A549 (cell line): ENCODE measurements at regions of chr7 and their contacts with region 1.

Region 1: DNA sequence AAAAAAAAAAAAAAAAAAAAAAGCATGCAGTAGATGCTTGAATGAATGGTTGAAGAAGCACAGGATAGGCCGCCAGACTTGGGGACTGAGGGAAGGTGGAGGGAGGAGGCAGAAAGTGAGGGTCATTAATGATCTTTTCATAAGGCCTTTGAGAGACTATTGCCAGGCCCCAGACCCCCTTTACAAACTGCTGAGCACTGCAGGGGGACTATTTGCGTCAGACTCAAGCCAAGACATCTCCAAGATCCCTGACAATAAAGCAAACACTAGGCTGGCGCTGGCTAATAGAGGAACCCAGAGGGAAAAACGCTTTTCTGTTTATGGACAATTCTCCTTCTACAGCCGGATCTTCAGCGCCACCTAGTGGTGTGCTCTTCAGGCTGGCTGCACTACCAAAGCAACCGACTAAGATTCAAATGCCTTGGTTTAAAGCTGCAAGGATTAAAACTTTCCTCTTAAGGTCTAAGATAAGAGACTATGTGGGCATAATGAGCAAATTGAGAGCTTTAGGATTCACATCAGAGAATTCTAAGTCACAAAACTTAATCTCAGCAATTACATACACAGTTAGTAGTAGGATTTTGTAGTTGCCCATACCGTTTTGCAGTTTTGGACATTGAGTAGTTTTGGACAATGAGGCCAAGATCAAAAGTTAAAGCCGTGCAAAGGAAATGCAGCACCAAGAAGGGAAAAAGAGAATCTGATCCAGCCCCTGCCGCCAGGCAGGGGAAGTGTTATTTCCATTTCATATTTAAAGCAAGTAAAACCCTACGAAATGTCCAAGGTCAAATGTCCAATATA is 17.9 kb upstream of the AGK start:
- DNase-seq: peak; percentile 66 to 75
- ATAC-seq: peak; percentile 87 to 97
- H3K4me3 ChIP-seq: no peak overlapping the region
- H3K27ac ChIP-seq: no peak overlapping the region
- H3K4me1 ChIP-seq: no peaks in the 10 kb centered on the region
- CTCF ChIP-seq: peak; percentile 91
- EP300 ChIP-seq: no peak
- POLR2A ChIP-seq: no peak
- RAD21 ChIP-seq: peak; percentile 88 to 92

Region 2: DNA sequence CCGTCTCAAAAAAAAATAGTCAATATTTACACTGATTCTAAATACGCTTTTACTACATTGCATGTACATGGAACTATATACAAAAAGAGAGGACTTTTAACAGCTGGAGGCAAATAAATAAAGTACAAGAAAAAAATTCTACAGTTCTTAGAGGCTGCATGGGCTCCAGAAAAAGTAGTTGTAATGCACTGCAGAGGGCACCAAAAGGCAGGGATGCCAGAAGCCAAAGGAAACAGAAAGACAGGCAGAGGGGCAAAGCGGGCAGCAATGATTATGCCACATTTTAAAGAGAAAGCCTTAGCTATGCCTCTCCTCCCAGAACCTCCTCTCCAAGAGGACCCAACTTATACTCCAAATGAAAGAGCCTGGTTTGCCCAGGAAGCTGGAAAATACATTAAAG is 872.2 kb before region 1 on chr7:
- CTCF ChIA-PET with region 1: interaction called, 13 read pairs
- POLR2A ChIA-PET with region 1: no interaction called
- DNase-seq: peak in 1 of 2 experiments; percentile 28
- ATAC-seq: peak; percentile 70 to 86; a peak in 5 of 6 replicates
- H3K4me3 ChIP-seq: no peak overlapping the region
- H3K27ac ChIP-seq: no peak overlapping the region
- H3K4me1 ChIP-seq: no peaks in the 10 kb centered on the region
- CTCF ChIP-seq: no peak; the same call in 2 of the 3 replicates
- EP300 ChIP-seq: no peak
- POLR2A ChIP-seq: no peak
- RAD21 ChIP-seq: peak; percentile 50 to 62

Region 3: DNA sequence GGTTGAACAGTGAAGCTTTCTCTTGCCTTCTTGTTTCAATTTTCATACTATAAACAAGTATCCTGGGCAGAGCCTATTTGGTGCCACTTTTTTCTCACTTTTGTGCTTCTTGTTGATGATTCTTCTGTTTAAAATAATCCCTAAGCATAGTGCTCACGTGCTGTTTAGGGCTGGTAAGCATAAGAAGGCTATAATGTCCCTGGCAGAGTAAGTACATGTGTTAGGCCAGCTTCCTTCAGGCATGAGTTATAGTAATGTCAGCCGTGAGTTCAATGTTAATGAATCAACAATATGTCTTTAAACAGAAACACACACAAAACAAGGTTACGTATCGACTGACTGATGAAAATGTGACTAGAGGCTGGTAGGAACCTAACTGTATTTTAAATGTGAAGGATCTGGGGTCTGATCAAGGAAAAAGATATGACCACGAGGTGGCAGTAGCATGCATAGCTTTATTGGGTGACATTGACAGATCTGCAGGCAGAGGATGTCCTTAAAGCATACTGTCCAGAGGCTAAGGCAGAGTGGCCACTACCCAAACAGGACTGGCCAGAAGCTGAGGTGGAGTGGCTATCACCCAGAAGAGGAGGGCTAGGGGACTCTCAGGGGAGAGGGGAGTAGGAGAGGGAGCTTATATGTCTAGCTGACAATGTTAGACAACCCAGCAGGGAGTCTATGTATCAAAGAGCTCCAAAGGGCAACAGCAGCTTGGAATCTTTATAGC is 722.4 kb before region 1 on chr7:
- CTCF ChIA-PET with region 1: interaction called, 19 read pairs
- POLR2A ChIA-PET with region 1: no interaction called
- DNase-seq: peak; percentile 52 to 75
- ATAC-seq: peak; percentile 100
- H3K4me3 ChIP-seq: no peak overlapping the region
- H3K27ac ChIP-seq: no peak overlapping the region
- H3K4me1 ChIP-seq: no peaks in the 10 kb centered on the region
- CTCF ChIP-seq: peak; percentile 85
- EP300 ChIP-seq: no peak
- POLR2A ChIP-seq: no peak
- RAD21 ChIP-seq: peak; percentile 76 to 81

Region 4: GRCh38 chr7:141462958-141463357 is 70.4 kb before region 1 on chr7:
- CTCF ChIA-PET with region 1: no interaction called
- POLR2A ChIA-PET with region 1: no interaction called
- DNase-seq: no peak
- ATAC-seq: no peak
- H3K4me3 ChIP-seq: no peak overlapping the region
- H3K27ac ChIP-seq: no peak overlapping the region
- H3K4me1 ChIP-seq: no peaks in the 10 kb centered on the region
- CTCF ChIP-seq: no peak
- EP300 ChIP-seq: no peak
- POLR2A ChIP-seq: no peak
- RAD21 ChIP-seq: no peak

Region 5: DNA sequence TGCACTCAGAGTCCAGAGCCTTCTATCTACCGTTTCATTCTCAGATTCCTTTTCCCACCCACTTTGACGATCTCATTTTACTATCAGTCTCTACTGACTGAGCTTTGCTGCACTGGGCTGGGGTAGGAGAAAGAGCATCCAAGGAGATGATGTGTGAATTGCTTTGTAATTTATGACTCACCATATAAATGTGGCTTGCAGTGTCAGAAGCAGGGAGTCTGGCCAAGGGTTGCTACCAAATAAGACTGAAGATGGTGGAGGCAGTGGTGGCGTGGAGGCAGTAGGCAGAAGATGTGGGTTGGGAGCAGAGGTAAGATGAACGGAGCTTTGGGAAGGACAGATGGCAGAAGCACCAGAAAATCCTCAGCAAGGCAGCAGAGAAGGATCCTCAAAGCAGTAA is 55.5 kb before region 1 on chr7:
- CTCF ChIA-PET with region 1: no interaction called
- POLR2A ChIA-PET with region 1: no interaction called
- DNase-seq: no peak
- ATAC-seq: no peak; a peak in 1 of 6 replicates
- H3K4me3 ChIP-seq: no peak overlapping the region
- H3K27ac ChIP-seq: no peak overlapping the region
- H3K4me1 ChIP-seq: no peaks in the 10 kb centered on the region
- CTCF ChIP-seq: no peak
- EP300 ChIP-seq: no peak
- POLR2A ChIP-seq: no peak
- RAD21 ChIP-seq: no peak

Region 6: DNA sequence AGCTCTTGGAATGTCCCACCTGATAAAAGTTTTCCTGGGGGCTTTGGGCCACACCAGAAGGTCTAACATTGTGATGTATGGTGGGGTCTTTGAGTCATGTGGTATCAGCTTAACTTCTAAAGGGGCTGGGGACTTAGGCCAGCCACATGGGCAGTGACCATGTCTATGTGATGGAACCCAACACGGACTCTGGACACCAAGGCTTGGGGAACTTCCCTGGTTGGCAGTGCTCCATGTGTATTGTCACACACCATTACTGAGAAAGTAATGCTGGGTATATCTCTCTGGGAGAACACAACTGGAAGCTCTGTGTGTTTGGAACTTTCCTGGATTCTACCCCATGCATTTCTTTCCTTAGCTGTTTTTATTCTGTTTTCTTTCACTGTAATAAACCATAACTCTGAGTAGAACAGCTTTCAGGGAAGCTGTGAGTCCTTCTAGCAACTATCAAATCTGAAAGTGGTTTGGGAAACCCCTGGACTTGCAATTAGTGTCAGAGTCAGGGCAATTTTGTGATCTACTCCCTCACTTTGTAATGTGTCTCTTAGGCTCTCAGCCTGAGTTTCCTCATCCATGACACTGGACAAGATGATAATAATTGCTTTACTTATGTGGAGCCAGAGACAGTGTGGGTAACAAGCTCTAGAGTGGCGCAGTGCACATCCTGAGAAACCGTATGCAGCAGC is 10.5 kb before region 1 on chr7:
- CTCF ChIA-PET with region 1: interaction called, 10 read pairs
- POLR2A ChIA-PET with region 1: no interaction called
- DNase-seq: no peak
- ATAC-seq: no peak
- H3K4me3 ChIP-seq: no peak overlapping the region
- H3K27ac ChIP-seq: no peak overlapping the region
- H3K4me1 ChIP-seq: no peaks in the 10 kb centered on the region
- CTCF ChIP-seq: no peak
- EP300 ChIP-seq: no peak
- POLR2A ChIP-seq: no peak
- RAD21 ChIP-seq: no peak

Region 7: DNA sequence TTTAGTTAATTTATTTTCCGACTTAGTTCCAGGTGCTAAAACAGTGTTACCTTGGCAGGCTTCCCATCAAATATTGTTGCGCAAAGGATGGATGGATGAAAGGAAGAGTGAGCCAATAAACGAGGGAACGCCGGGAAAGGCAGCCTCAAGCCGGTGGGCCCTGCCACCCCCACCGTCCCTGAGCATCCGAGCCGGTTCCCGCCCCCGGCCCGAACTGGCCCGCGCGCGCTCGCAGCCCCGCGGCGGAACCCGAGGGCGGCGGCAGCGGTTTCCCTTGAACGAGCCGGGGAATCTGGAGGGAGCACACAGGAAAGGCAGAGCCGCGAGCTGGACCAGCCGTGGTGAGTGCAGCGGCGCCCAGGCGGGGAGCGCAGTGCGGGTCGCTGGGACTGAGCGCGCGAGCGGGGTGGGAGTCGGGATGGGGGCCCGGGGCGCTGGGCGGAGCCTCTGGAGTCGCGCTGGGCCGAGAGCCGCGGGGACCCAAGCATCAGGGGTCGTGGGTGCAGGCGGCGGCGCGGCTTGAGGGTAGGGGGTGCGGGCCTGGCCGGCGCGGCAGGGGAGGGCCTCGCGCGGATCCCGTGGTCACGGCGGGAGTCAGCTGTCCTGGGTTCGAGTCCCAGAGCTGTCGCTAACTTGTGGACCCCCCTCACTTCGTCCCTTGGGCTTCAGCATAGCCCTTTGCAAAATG is 17.9 kb after region 1 on chr7 and contains the start of gene AGK:
- CTCF ChIA-PET with region 1: interaction called, 16 read pairs
- POLR2A ChIA-PET with region 1: no interaction called
- DNase-seq: peak; percentile 76 to 81
- ATAC-seq: peak; percentile 99
- H3K4me3 ChIP-seq: peak within 1 kb of the TSS; percentile 96
- H3K27ac ChIP-seq: peak within 1 kb of the TSS; percentile 92 to 98
- H3K4me1 ChIP-seq: peaks cover 14% of the 10 kb centered on the region; the same call in 2 of the 3 replicates
- CTCF ChIP-seq: no peak
- EP300 ChIP-seq: no peak
- POLR2A ChIP-seq: peak; percentile 89
- RAD21 ChIP-seq: peak; percentile 23; a peak in 3 of 5 replicates
- polyA plus RNA-seq, gene AGK: 60.8 and 63.5 TPM in 2 replicates

Region 8: GRCh38 chr7:141654551-141654950 is 121.2 kb after region 1 on chr7:
- CTCF ChIA-PET with region 1: interaction called, 12 read pairs
- POLR2A ChIA-PET with region 1: no interaction called
- DNase-seq: peak; percentile 67 to 76
- ATAC-seq: peak; percentile 78 to 86
- H3K4me3 ChIP-seq: no peak overlapping the region
- H3K27ac ChIP-seq: no peak overlapping the region
- H3K4me1 ChIP-seq: peaks cover 4% of the 10 kb centered on the region; the same call in 2 of the 3 replicates
- CTCF ChIP-seq: peak; percentile 75
- EP300 ChIP-seq: no peak
- POLR2A ChIP-seq: no peak
- RAD21 ChIP-seq: peak; percentile 78